A673 (cell line): ENCODE measurements at regions of chr15 and their contacts with region 1.

Region 1: DNA sequence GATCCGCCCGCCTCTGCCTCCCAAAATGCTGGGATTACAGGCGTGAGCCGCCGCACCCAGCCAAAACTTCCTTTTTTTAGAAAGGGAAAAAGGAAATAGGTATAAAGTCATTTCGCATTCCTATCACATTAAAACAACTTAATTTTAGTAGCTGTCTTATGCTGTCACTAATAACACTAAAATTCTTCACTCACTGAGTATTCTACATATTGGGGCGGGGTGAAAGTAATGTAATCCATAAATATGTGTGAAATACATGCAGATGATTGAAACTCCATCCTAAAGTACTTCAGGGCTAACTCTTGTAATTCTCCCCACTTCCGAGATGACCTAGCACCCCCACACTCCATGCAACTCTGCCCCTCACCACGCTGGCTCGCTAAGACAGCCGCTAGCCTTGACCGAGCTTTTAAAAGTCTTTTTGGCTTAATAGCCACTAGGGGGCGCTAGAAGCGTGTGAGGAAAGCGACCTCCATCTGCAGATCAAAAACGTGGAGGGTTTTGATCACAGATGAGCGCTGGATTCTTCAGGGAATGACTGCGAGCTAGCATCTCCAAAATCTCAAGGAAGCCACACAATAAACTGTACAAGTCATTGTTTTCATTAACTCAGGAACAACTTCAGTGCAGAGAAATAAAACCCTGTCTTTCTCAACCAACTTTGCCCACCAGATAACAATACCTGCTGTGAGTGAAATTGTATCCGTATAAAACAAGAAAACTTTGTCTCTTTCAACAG is 129.3 kb upstream of the IGF1R start:
- DNase-seq: peak; percentile 85
- H3K4me3 ChIP-seq: no peak overlapping the region
- H3K27ac ChIP-seq: no peak overlapping the region
- H3K4me1 ChIP-seq: no peaks in the 10 kb centered on the region
- H3K27me3 ChIP-seq: no peaks in the 10 kb centered on the region
- CTCF ChIP-seq: peak; percentile 87

Region 2: DNA sequence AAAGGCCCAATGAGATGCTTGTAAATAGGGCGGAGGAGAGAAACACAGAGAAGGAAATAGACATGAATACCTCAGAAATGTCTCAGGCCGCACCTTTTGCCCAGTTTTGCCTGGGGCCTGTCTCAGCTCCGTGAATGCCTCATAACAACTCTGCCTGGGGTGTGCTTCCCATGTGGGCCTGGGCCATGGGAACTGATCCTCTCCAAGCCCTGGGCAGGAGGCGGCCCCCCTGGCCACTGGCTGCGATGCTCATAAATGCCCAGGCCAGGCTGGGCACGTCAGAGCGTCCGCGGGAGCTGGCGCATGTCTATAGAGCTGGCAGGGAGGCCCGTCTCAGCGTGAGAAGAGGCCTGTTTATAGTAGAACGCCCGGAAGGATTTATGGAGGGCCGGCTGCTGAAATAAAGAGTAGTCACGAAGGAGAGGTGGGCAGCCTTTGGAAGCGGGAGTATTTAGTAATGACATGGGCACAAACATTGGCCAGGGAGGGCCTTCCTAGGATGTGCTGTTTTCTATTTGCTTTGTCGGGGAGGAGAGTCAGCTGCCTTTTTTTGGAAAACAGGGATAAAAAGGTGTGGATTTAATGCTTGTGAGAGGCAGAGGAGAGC is 43.4 kb after region 1 on chr15:
- CTCF ChIA-PET with region 1: no interaction called
- POLR2A ChIA-PET with region 1: no interaction called
- intact Hi-C with region 1: no loop called
- DNase-seq: no peak
- H3K4me3 ChIP-seq: no peak overlapping the region
- H3K27ac ChIP-seq: no peak overlapping the region
- H3K4me1 ChIP-seq: no peaks in the 10 kb centered on the region
- H3K27me3 ChIP-seq: no peaks in the 10 kb centered on the region
- CTCF ChIP-seq: no peak

Region 3: GRCh38 chr15:98647774-98648653 is 129.0 kb after region 1 on chr15 and contains the start of gene IGF1R:
- CTCF ChIA-PET with region 1: interaction called, 8 read pairs
- POLR2A ChIA-PET with region 1: no interaction called
- intact Hi-C with region 1: loop called (anchors 1 kb)
- DNase-seq: peak; percentile 96
- H3K4me3 ChIP-seq: peak within 1 kb of the TSS; percentile 87
- H3K27ac ChIP-seq: peak within 1 kb of the TSS; percentile 88
- H3K4me1 ChIP-seq: peaks cover 14% of the 10 kb centered on the region
- H3K27me3 ChIP-seq: peaks cover 35% of the 10 kb centered on the region
- CTCF ChIP-seq: 0 out of 2 replicates have a peak, but pooled peaks have one; percentile 15
- total RNA-seq, gene IGF1R: 34.9 and 41.2 TPM in 2 replicates

Region 4: DNA sequence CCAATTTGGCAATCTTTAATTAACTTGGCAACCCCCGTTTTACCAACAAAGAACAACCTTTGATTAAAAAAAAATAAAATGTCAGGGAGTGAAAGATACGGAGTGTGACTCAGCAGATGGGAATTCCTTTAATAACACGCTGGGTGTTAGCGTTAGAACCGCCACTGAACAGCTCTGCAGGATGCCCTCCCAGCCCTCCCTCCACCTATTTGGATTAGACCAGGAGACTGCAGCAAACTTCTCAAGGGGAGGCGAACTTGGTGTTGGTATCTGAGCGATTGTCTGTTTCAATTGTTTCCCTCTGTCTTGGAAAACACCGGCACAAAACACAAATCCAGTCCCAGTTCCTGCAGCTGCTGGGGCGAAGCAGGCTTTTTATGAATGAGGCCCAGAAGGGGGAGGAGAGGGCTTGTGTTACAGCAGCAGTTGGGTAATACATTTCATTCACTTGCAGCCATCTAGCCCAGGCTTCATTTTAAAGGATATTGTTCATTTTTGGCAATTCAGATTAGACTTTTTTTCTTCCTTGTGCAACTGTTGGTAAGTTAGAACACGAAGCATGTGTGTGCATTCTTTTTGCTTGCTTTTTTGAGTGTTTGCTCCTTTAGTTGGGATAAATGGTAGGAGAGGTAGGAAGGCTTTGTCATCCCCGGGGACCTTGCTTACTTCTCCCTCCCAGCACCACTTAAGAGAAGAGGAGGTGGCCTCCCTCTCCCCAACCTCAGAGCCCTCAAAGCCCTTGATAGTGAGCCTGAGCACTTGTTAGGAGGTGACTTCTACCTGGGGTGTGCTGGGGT is 281.6 kb after region 1 on chr15:
- CTCF ChIA-PET with region 1: no interaction called
- POLR2A ChIA-PET with region 1: no interaction called
- intact Hi-C with region 1: no loop called
- DNase-seq: peak; percentile 96
- H3K4me3 ChIP-seq: peak overlapping the region; percentile 30
- H3K27ac ChIP-seq: peak overlapping the region; percentile 98
- H3K4me1 ChIP-seq: peaks cover 79% of the 10 kb centered on the region
- H3K27me3 ChIP-seq: no peaks in the 10 kb centered on the region
- CTCF ChIP-seq: 0 out of 2 replicates have a peak, but pooled peaks have one; percentile 7

Region 5: DNA sequence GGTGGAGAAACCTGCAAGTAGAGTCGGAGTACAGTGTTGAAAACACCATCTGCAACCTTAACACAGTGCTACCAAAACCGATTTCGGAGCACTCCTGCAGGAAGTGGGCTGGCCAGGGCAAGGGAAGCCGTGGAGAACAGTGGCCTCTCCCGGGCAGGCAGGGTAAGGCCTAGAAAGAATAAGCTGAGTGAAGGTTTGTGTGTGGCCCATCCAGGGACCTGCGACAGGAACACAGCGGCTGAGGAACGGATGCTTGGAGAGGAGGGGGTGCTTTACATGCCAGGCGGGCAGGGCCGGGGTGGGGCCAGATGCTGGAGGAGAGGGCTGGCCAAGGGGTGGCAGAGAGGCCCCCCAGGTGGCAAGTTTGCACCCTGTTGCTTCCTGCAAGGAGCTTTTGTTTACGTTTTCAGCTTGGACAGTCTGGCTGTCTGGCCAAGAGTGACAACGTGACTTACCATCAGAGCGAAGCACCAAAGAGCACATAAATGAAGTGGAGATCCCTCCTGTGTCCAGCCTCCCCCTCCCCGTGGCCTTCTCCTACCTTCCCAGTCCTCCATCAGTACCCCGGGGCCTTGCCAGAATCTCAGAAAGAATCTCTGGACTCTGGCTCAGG is 332.1 kb after region 1 on chr15:
- CTCF ChIA-PET with region 1: interaction called, 11 read pairs
- POLR2A ChIA-PET with region 1: no interaction called
- intact Hi-C with region 1: no loop called
- DNase-seq: peak; percentile 89
- H3K4me3 ChIP-seq: peak overlapping the region; percentile 59
- H3K27ac ChIP-seq: no peak overlapping the region
- H3K4me1 ChIP-seq: peaks cover 29% of the 10 kb centered on the region
- H3K27me3 ChIP-seq: no peaks in the 10 kb centered on the region
- CTCF ChIP-seq: peak; percentile 88

Region 6: GRCh38 chr15:98881526-98882520 is 362.8 kb after region 1 on chr15:
- CTCF ChIA-PET with region 1: interaction called, 4 read pairs
- POLR2A ChIA-PET with region 1: no interaction called
- intact Hi-C with region 1: loop called (anchors 1 kb)
- DNase-seq: peak; percentile 85
- H3K4me3 ChIP-seq: no peak overlapping the region
- H3K27ac ChIP-seq: no peak overlapping the region
- H3K4me1 ChIP-seq: peaks cover 4% of the 10 kb centered on the region
- H3K27me3 ChIP-seq: no peaks in the 10 kb centered on the region
- CTCF ChIP-seq: peak; percentile 71

Region 7: GRCh38 chr15:98904544-98904943 is 385.6 kb after region 1 on chr15:
- CTCF ChIA-PET with region 1: no interaction called
- POLR2A ChIA-PET with region 1: no interaction called
- intact Hi-C with region 1: loop called (anchors 5 kb)
- DNase-seq: peak; percentile 73
- H3K4me3 ChIP-seq: no peak overlapping the region
- H3K27ac ChIP-seq: no peak overlapping the region
- H3K4me1 ChIP-seq: no peaks in the 10 kb centered on the region
- H3K27me3 ChIP-seq: no peaks in the 10 kb centered on the region
- CTCF ChIP-seq: peak; percentile 81

Region 8: DNA sequence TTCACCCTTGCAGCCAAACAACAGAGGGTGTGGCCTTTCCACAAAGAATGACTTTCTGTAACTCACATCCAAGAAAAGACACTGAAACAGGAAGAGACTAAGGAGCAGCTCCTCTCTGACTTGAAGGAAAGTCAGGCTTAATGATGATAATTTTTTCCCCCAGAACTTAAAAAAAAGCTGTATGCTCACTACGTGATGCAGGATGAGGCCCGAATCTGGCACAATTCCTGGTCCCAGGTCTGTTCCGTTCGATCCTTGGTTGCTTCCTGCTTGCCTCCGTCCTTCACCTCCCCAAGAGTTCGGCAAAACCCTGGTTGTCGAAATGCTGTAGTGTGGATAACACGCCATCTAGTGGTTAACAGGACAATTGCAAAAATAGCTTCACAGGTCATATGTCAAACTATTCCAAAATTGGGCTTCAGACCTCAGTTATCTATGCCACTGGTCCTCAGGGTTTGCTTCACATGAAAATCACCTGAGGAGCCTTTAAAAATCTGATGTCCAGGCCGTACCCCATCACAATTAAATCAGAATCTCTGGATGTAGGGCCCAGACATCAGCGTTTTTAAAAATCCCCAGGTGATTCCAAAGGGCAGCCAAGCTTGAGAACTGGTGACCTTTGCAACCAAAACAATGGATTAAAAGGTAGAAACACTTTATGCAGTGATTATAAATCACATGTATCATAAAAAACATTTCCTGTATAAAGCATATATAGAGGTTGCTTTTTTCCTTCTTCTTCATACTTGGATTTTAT is 557.7 kb after region 1 on chr15:
- CTCF ChIA-PET with region 1: interaction called, 8 read pairs
- POLR2A ChIA-PET with region 1: no interaction called
- intact Hi-C with region 1: loop called (anchors 1 kb)
- DNase-seq: peak; percentile 81
- H3K4me3 ChIP-seq: peak overlapping the region; percentile 28
- H3K27ac ChIP-seq: no peak overlapping the region
- H3K4me1 ChIP-seq: no peaks in the 10 kb centered on the region
- H3K27me3 ChIP-seq: no peaks in the 10 kb centered on the region
- CTCF ChIP-seq: peak; percentile 85